AG04449 (cell line): ENCODE measurements at regions of chr4 and their contacts with region 1.

Region 1: DNA sequence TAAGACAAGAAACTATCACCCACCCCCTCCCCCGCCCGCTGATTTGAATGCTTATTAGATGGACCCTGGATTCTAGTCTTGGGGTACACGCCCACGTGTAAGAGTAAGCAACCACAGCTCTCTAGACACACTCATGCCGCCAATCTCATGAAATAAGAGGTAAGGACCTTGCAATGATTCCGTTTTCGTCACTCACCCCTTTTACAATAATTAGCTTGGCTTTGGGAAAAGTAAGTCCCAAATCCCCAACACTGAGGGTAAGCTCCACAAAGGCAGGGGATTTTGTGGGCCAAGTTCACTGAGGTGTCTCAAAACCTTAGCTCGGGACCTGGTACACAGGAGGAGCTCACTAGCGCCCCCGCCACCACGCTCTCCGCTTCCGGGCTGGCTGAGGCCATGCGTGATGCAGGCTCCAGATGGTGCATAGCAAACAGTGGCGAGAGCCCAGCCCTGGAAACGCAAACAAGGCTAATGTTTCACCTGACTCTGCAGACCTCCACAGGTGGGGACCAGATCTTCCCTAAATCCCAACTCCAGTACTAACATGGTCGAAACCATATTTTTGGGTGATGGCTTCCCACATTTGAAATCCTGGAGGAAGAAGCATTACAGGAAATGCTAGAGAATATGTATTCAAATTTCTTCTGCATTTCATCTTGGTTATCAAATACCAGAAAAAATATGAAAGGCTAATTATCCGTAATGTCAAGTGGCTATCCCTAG is 4.1 kb downstream of the PLAC8 start:
- DNase-seq: no peak
- H3K4me3 ChIP-seq: peak overlapping the region; percentile 55
- CTCF ChIP-seq: peak; percentile 89

Region 2: DNA sequence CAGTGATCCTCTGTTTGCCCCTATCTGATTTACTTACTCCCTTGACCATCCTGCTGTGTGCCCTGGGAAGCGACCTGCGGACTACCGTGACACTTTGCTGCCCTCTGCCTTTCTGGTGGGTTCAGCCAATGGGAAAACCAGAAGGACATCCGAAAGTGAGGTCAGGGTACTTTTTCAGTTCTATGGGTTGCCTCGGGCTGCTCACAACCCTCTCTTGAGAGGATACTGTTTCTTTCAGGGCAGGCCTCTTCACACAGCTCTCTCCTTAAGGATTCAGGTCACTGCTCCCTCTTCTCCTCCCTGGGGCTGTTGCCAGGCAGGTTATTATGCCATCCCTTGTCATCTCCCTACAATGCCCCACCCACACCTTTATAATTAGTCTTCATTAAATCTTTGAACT is 17.3 kb before region 1 on chr4:
- CTCF ChIA-PET with region 1: interaction called, 29 read pairs
- POLR2A ChIA-PET with region 1: no interaction called
- DNase-seq: no peak
- H3K4me3 ChIP-seq: no peak overlapping the region
- CTCF ChIP-seq: no peak

Region 3: DNA sequence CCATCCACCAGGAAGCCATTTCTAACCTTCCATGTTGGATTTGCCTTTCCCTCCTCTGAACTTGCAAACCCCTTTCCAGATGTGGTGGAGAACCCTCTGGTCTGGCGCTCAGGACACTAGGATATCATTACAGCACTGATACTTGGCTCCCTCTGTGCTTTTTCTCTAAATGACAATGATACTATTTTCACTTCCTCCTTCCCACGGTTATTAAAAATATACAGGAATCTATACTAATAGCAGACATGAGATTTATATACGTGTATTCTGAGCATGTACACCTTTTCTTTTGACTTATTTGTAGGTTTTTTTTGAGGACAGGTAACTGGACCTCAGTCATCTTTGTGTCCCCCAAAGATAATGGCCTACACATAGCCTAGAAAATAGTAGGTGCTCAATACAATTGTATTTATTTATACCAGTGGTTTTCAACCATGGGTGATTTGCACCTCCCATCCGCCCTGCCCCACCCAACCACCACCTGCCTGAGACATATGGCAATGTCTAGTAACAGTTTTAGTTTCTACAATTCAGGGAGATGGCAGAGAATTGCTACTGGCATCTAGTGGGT is 64.5 kb after region 1 on chr4:
- CTCF ChIA-PET with region 1: no interaction called
- POLR2A ChIA-PET with region 1: no interaction called
- DNase-seq: no peak
- H3K4me3 ChIP-seq: no peak overlapping the region
- CTCF ChIP-seq: no peak

Region 4: GRCh38 chr4:83231620-83232076 is 121.3 kb after region 1 on chr4:
- CTCF ChIA-PET with region 1: no interaction called
- POLR2A ChIA-PET with region 1: no interaction called
- DNase-seq: no peak
- H3K4me3 ChIP-seq: no peak overlapping the region
- CTCF ChIP-seq: no peak

Region 5: GRCh38 chr4:83252782-83253405 is 142.5 kb after region 1 on chr4:
- CTCF ChIA-PET with region 1: interaction called, 18 read pairs
- POLR2A ChIA-PET with region 1: interaction called, 4 read pairs
- DNase-seq: no peak
- H3K4me3 ChIP-seq: no peak overlapping the region
- CTCF ChIP-seq: peak; percentile 59

Region 6: DNA sequence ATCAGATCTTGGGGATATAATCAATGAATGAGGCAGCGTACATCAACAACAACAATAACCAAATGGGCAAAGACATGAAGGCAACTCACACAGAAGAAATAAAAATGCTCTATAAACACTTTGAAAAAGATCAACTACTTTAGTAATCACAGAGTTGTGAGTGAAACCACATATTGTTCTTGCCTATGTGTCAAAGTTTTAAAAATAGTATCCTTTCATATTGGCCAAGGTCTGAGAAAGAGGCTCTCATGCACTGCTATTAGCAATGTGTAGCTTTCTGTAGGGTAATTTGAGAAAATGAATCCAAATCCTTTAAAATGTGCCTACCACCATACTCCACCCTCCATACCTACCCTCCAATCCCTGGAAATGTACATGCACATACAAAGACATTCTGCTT is 149.2 kb after region 1 on chr4:
- CTCF ChIA-PET with region 1: interaction called, 27 read pairs
- POLR2A ChIA-PET with region 1: interaction called, 4 read pairs
- DNase-seq: no peak
- H3K4me3 ChIP-seq: no peak overlapping the region
- CTCF ChIP-seq: no peak